ENCODE measurements at regions of chr12 and their contacts with region 1.

Region 1: GRCh38 chr12:49707128-49707811 is at the start of gene FMNL3:
- DNase-seq: peak; percentile 100
- ATAC-seq: peak; percentile 98
- total RNA-seq, gene FMNL3: 10.8 TPM

Region 2: GRCh38 chr12:49644620-49644994 is 62.7 kb before region 1 on chr12:
- intact Hi-C with region 1: loop called (anchors 1 kb)
- DNase-seq: peak; percentile 86
- ATAC-seq: peak; percentile 81

Region 3: GRCh38 chr12:49673446-49674317 is 33.6 kb before region 1 on chr12:
- intact Hi-C with region 1: loop called (anchors 2 kb)
- DNase-seq: peak; percentile 94
- ATAC-seq: peak; percentile 98